Activated CD4-positive, alpha-beta T cell treated with anti-CD3 and anti-CD28 coated beads, Interleukin-2, amount 10 ng/mL, durations not matched to agents 24 days and 14 days (primary cell): ENCODE measurements at regions of chr2 and their contacts with region 1.

Region 1: DNA sequence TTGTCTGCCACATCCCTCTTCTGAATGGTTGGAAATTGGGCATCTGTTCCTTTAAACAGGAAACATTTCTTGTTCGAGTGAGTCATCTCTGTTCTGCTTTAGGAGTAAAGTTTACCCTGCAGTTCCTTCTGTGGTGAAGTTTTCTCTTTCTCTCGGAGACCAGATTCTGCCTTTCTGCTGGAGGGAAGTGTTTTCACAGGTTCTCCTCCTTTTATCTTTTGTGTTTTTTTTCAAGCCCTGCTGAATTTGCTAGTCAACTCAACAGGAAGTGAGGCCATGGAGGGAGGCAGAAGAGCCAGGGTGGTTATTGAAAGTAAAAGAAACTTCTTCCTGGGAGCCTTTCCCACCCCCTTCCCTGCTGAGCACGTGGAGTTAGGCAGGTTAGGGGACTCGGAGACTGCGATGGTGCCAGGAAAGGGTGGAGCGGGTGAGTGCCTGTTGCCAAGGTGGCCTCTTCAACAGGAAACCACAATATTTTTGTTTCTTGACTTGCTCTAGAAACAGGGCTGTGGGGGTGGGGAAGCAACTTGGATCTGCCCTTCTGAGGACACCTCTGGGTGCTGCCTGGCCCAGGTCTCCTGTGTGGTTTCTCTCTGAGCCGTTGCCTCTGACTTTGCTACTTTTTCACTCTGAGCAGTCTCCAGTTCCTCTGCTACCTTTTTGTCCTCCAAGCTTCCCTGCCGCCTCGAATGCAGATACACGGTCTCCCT is 2.2 kb upstream of the CASP8 start:
- DNase-seq: peak; percentile 98
- H3K4me3 Mint-ChIP-seq: peak overlapping the region; percentile 100
- H3K27ac Mint-ChIP-seq: peak overlapping the region; percentile 98
- H3K4me1 Mint-ChIP-seq: peaks cover 71% of the 10 kb centered on the region
- H3K27me3 Mint-ChIP-seq: no peaks in the 10 kb centered on the region

Region 2: GRCh38 chr2:200888704-200889625 is 369.1 kb before region 1 on chr2 and contains the starts of genes NIF3L1 and PPIL3:
- intact Hi-C with region 1: loop called (anchors 1 kb)
- DNase-seq: peak; percentile 99
- H3K4me3 Mint-ChIP-seq: peak within 1 kb of the TSS; percentile 92
- H3K27ac Mint-ChIP-seq: peak within 1 kb of the TSS; percentile 99
- H3K4me1 Mint-ChIP-seq: peaks cover 46% of the 10 kb centered on the region
- H3K27me3 Mint-ChIP-seq: no peaks in the 10 kb centered on the region
- total RNA-seq, gene NIF3L1: 30.7 and 33.4 TPM in 2 replicates
- total RNA-seq, gene PPIL3: 52.6 and 52.8 TPM in 2 replicates

Region 3: GRCh38 chr2:201135411-201135810 is 122.7 kb before region 1 on chr2:
- intact Hi-C with region 1: no loop called
- DNase-seq: no peak
- H3K4me3 Mint-ChIP-seq: peak overlapping the region; percentile 70
- H3K27ac Mint-ChIP-seq: peak overlapping the region; percentile 78
- H3K4me1 Mint-ChIP-seq: peaks cover 51% of the 10 kb centered on the region
- H3K27me3 Mint-ChIP-seq: no peaks in the 10 kb centered on the region

Region 4: GRCh38 chr2:201182650-201183364 is 75.3 kb before region 1 on chr2 and contains the start of gene CASP10:
- intact Hi-C with region 1: loop called (anchors 1 kb)
- DNase-seq: peak; percentile 87
- H3K4me3 Mint-ChIP-seq: peak within 1 kb of the TSS; percentile 98
- H3K27ac Mint-ChIP-seq: peak within 1 kb of the TSS; percentile 95
- H3K4me1 Mint-ChIP-seq: peaks cover 49% of the 10 kb centered on the region
- H3K27me3 Mint-ChIP-seq: no peaks in the 10 kb centered on the region
- total RNA-seq, gene CASP10: 12.7 and 13.1 TPM in 2 replicates

Region 5: DNA sequence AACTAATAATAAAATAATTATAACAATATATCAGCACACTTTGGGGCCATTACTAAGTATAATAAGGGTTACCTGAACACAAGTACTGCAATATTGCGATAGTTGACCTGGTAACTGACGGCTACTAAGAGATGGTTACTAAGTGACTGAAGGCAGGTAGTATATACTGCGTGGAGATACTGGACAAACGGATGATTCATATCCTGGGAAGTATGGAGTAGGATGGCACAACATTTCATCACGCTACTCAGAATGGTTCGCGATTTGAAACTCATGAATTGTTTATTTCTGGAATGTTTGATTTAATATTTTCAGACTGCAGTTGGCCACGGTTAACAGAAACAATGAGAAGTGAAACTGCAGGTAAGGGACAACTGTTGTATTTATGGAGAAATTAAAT is 138.5 kb after region 1 on chr2:
- intact Hi-C with region 1: no loop called
- DNase-seq: no peak
- H3K4me3 Mint-ChIP-seq: no peak overlapping the region
- H3K27ac Mint-ChIP-seq: no peak overlapping the region
- H3K4me1 Mint-ChIP-seq: peaks cover 7% of the 10 kb centered on the region
- H3K27me3 Mint-ChIP-seq: no peaks in the 10 kb centered on the region

Region 6: GRCh38 chr2:201414099-201415023 is 156.2 kb after region 1 on chr2:
- intact Hi-C with region 1: loop called (anchors 2 kb)
- DNase-seq: peak; percentile 64
- H3K4me3 Mint-ChIP-seq: no peak overlapping the region
- H3K27ac Mint-ChIP-seq: no peak overlapping the region
- H3K4me1 Mint-ChIP-seq: peaks cover 5% of the 10 kb centered on the region
- H3K27me3 Mint-ChIP-seq: no peaks in the 10 kb centered on the region

Region 7: DNA sequence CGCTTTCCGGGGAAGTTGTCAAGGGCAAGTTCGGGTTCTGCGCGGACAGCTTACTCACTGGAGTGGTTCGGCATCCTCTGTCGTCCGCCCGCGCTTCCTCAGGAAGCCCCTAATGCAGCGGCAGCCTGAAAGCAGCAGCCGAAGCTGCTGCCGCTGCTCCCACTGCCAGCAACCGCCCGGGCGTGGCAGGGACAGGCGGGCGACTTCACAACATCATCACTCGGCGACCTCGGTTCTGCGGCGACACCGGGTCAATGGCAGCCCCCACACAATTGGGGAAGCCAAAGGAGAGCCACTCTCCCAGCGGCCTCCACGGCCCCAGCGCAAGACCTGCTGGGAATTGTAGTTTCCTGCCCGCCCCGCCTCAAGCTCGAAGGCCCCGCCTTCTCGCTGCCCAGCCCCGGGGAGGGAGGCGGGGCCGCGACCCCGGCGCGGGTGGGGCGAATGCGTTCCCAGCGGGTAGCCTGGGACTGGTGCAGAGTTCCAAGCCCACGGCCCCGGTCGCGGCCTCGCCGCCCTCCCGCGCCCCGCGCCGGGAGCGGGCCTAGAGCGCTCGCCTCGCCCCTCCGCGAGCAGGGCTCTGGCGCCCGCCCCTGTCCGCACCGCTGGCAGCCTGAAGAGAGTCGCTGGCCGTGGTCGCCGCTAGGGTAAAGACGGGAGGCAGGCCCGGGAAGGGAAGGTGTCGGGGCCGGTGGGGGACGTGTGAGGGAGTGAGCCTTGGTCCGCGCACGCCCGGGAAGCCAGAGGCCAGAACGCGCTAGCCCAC is 193.4 kb after region 1 on chr2 and contains the starts of genes STRADB and TRAK2:
- intact Hi-C with region 1: loop called (anchors 1 kb)
- DNase-seq: peak; percentile 99
- H3K4me3 Mint-ChIP-seq: peak within 1 kb of the TSS; percentile 95
- H3K27ac Mint-ChIP-seq: peak within 1 kb of the TSS; percentile 97
- H3K4me1 Mint-ChIP-seq: peaks cover 42% of the 10 kb centered on the region
- H3K27me3 Mint-ChIP-seq: peaks cover 8% of the 10 kb centered on the region
- total RNA-seq, gene STRADB: 18.5 and 20.1 TPM in 2 replicates
- total RNA-seq, gene TRAK2: 26.5 and 29.1 TPM in 2 replicates

Region 8: GRCh38 chr2:201780674-201781581 is 522.8 kb after region 1 on chr2 and contains the start of gene ALS2:
- intact Hi-C with region 1: loop called (anchors 2 kb)
- DNase-seq: peak; percentile 99
- H3K4me3 Mint-ChIP-seq: peak within 1 kb of the TSS; percentile 95
- H3K27ac Mint-ChIP-seq: peak within 1 kb of the TSS; percentile 92
- H3K4me1 Mint-ChIP-seq: peaks cover 22% of the 10 kb centered on the region
- H3K27me3 Mint-ChIP-seq: peaks cover 20% of the 10 kb centered on the region
- total RNA-seq, gene ALS2: 10.7 and 11.3 TPM in 2 replicates

Region 9: GRCh38 chr2:202265467-202266277 is 1007.6 kb after region 1 on chr2 and contains the start of gene NOP58:
- intact Hi-C with region 1: loop called (anchors 5 kb)
- DNase-seq: peak; percentile 98
- H3K4me3 Mint-ChIP-seq: peak within 1 kb of the TSS; percentile 65
- H3K27ac Mint-ChIP-seq: peak within 1 kb of the TSS; percentile 80
- H3K4me1 Mint-ChIP-seq: peaks cover 19% of the 10 kb centered on the region
- H3K27me3 Mint-ChIP-seq: no peaks in the 10 kb centered on the region
- total RNA-seq, gene NOP58: 221 and 228 TPM in 2 replicates